H1 (cell line): ENCODE measurements at regions of chr1 and their contacts with region 1.

Region 1: GRCh38 chr1:20696397-20697329 is 21.1 kb downstream of the KIF17 start:
- DNase-seq: peak; percentile 82 to 90
- H3K4me3 ChIP-seq: peak overlapping the region; percentile 19 to 77 (median 64)
- H3K27ac ChIP-seq: peak overlapping the region; percentile 37; the same call in 1 of the 2 replicates
- H3K4me1 ChIP-seq: peaks cover 0 to 6% (median 4%) of the 10 kb centered on the region in 4 experiments; a peak in 3 of 7 replicates
- H3K27me3 ChIP-seq: no peaks in the 10 kb centered on the region; a peak in 1 of 7 replicates
- CTCF ChIP-seq: peak; percentile 83 to 96 (median 85)
- EP300 ChIP-seq: no peak; a peak in 1 of 3 replicates
- POLR2A ChIP-seq: no peak
- RAD21 ChIP-seq: peak; percentile 86 to 87

Region 2: DNA sequence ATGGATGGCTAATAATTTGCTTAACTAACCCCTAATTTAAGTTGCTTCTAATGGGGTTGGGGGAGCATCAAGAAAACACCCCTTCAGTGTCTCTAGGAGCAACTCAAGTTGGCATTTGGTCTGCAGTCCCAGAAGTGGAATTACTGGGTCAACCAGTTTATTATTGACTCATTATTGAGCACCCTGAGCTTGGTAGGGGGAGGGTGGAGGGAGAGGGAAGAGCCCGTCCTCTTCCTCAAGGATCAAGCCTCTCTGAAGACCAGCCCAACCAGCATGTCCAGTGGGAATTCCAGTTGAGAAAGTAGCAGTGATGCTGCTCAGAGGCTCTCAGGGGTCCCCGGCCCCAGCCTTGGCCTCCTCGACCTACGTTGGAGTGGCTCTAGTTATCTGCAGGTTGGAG is 559.6 kb before region 1 on chr1:
- CTCF ChIA-PET with region 1: no interaction called
- POLR2A ChIA-PET with region 1: no interaction called
- DNase-seq: no peak
- H3K4me3 ChIP-seq: no peak overlapping the region
- H3K27ac ChIP-seq: no peak overlapping the region
- H3K4me1 ChIP-seq: no peaks in the 10 kb centered on the region
- H3K27me3 ChIP-seq: no peaks in the 10 kb centered on the region
- CTCF ChIP-seq: no peak
- EP300 ChIP-seq: no peak
- POLR2A ChIP-seq: no peak
- RAD21 ChIP-seq: no peak

Region 3: DNA sequence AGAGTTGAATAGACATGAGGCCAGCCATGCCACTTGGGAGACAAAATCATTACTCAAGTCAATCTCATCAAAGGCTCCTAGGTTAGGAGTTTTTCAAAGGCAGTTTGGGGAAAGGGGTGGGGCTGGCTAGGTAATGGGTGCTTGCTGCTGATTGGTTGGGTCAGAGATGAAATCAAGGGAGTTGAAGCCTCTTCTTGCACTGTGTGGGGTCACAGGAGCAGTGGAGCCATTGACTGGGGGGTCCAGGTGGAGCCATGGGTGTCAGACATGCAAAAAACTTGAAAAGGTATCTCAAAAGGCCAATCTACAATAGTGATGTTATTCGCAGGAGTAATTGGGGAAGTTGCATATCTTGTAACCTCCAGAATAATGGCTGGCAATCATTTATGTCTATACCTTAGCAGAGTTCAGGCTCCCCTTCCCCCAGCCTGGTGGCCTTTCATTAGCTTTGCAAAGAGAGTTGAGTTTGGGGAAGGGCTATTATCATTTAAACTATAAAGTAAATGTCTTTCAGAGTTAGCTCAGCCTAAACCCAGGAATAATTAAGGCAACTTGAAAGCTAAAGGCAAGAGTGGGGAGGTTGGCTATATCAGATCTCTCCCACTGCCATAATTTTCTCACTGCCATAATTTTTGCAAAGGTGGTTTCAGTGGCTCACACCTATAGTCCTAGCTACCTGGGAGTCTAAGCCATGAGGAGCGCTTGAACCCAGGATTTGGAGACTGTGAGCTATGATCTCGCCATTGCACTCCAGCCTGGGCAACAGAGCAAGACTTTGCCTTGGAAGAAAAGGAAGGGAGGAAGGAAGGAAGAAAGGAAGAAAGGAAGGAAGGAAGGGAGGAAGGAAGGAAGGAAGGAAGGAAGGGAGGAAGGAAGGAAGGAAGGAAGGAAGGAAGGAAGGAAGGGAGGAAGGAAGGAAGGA is 71.2 kb before region 1 on chr1:
- CTCF ChIA-PET with region 1: no interaction called
- POLR2A ChIA-PET with region 1: no interaction called
- DNase-seq: peak; percentile 53 to 59
- H3K4me3 ChIP-seq: peak overlapping the region in 1 of 4 experiments; percentile 31; a peak in 2 of 8 replicates
- H3K27ac ChIP-seq: no peak overlapping the region
- H3K4me1 ChIP-seq: peaks cover 0 to 8% (median 1%) of the 10 kb centered on the region in 4 experiments; a peak in 2 of 7 replicates
- H3K27me3 ChIP-seq: no peaks in the 10 kb centered on the region
- CTCF ChIP-seq: no peak
- EP300 ChIP-seq: no peak
- POLR2A ChIP-seq: no peak
- RAD21 ChIP-seq: no peak

Region 4: DNA sequence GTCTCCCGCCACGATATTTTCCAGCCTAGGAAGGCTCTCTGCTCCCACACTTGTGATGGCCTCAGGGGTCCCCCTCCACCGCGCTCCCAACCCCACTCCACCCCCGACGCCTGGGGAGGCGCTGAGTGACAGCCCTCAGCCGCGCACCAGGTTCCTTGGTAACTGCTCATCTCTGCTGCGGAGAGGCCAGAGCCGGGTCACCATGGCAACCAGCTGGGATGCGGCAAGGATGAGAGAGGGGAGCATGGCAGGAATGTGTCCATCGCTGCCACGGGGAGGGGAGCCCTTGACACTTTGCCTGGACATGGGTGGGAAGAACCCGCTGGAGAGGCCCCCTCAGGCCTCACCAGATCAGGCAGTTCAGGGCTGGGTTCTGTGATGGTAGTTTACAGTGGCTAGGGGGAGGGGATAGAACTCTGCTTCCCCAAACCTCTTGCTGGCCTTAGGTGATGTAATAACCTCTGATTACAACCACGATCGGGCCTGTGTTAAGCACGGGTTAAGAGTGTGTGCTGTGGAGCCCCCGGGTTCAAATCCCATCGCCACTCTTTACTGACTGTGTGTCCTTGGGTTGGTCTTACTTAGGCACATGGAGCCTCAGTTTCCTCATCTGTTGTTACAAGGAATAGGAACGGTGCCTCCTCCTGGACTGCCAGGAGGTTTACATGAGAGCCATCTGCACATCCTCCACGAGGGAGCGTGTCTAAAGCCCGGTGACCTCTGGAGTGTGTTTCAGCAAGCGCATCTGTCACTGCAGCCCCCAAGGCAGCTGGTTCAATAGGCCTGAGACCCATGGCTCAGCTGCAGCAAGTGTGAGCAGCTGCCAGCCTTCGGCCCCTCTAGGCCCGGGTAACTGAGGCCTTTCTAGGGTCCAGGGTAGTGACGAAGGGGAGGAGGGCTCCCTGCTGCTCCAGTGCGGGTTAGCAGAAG is 14.9 kb after region 1 on chr1:
- CTCF ChIA-PET with region 1: interaction called, 29 read pairs
- POLR2A ChIA-PET with region 1: interaction called, 4 read pairs
- DNase-seq: no peak
- H3K4me3 ChIP-seq: no peak overlapping the region
- H3K27ac ChIP-seq: no peak overlapping the region
- H3K4me1 ChIP-seq: peaks cover 0 to 1% (median 0%) of the 10 kb centered on the region in 4 experiments; a peak in 3 of 7 replicates
- H3K27me3 ChIP-seq: peaks cover 0 to 1% (median under 1%) of the 10 kb centered on the region in 4 experiments; a peak in 6 of 7 replicates
- CTCF ChIP-seq: peak in 2 of 3 experiments; percentile 29 to 52; a peak in 3 of 4 replicates
- EP300 ChIP-seq: no peak
- POLR2A ChIP-seq: no peak
- RAD21 ChIP-seq: no peak

Region 5: GRCh38 chr1:20717452-20718342 is 21.0 kb after region 1 on chr1 and contains the start of gene KIF17:
- CTCF ChIA-PET with region 1: interaction called, 82 read pairs
- POLR2A ChIA-PET with region 1: interaction called, 3 read pairs
- DNase-seq: peak in 1 of 2 experiments; percentile 93
- H3K4me3 ChIP-seq: peak within 1 kb of the TSS; percentile 28 to 69 (median 56)
- H3K27ac ChIP-seq: no peak within 1 kb of the TSS; the same call in 1 of the 2 replicates
- H3K4me1 ChIP-seq: peaks cover 0 to 7% (median under 1%) of the 10 kb centered on the region in 4 experiments; a peak in 5 of 7 replicates
- H3K27me3 ChIP-seq: peaks cover 0 to 22% (median 10%) of the 10 kb centered on the region in 4 experiments; a peak in 6 of 7 replicates
- CTCF ChIP-seq: no peak
- EP300 ChIP-seq: no peak
- POLR2A ChIP-seq: no peak
- RAD21 ChIP-seq: no peak
- total RNA-seq, gene KIF17: 9.9 and 10.4 TPM in 2 replicates

Region 6: DNA sequence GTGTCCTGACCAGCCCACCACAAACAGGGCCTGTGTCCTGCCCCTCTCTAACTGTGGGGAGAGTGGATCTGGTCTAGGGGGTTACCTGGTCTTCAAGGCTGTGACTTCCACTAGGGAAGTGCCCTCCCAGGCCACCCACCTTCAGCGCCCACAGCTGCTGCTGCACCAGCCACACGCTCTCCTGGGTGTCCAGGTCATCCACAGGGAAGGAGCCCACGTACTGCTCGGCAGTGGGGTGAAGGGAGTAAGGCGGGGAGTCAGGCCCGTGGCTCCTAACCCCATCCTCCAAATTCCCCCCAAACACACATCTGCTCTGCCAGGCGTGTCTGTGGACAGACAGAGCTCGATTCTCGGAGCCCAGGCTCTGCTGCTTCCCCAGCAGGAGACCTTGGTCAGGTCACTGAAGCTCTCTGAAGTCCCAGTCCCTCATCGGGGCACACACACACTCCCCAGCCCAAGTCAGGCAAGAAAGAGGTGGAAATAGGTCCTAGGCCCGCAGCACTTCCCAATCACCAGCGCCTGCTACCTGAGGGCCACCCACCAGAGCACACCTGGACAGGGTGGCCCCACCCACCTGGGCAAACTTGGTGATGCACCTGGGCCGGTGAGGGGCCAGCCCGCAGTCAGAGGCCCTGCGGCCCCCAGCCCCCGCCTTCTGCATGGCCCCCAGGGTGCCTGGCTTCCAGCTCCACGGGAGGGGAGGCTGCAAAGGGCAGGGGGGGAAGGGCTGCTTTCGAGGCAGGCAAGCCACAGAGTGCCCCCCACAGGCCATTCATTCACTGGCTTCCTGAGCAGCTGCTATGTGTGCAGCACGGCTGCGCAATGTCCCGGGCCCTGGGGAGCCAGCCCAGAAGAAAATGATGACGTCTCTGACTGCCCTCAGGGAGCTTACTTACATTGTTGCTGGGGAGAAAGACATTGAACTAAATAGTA is 31.0 kb after region 1 on chr1:
- CTCF ChIA-PET with region 1: interaction called, 82 read pairs
- POLR2A ChIA-PET with region 1: interaction called, 16 read pairs
- DNase-seq: peak in 1 of 2 experiments; percentile 81
- H3K4me3 ChIP-seq: peak overlapping the region in 1 of 4 experiments; percentile 34; a peak in 1 of 8 replicates
- H3K27ac ChIP-seq: no peak overlapping the region
- H3K4me1 ChIP-seq: peaks cover 0 to 43% (median 31%) of the 10 kb centered on the region in 4 experiments; a peak in 6 of 7 replicates
- H3K27me3 ChIP-seq: peaks cover 2 to 17% (median 14%) of the 10 kb centered on the region in 4 experiments
- CTCF ChIP-seq: peak in 2 of 3 experiments; percentile 44 to 59; a peak in 2 of 4 replicates
- EP300 ChIP-seq: peak in 1 of 2 experiments; percentile 53; a peak in 1 of 3 replicates
- POLR2A ChIP-seq: no peak
- RAD21 ChIP-seq: peak; percentile 52 to 54